Head of caudate nucleus (tissue), 42 donors: ENCODE measurements at regions of chr5 and their contacts with region 1.

Region 1: DNA sequence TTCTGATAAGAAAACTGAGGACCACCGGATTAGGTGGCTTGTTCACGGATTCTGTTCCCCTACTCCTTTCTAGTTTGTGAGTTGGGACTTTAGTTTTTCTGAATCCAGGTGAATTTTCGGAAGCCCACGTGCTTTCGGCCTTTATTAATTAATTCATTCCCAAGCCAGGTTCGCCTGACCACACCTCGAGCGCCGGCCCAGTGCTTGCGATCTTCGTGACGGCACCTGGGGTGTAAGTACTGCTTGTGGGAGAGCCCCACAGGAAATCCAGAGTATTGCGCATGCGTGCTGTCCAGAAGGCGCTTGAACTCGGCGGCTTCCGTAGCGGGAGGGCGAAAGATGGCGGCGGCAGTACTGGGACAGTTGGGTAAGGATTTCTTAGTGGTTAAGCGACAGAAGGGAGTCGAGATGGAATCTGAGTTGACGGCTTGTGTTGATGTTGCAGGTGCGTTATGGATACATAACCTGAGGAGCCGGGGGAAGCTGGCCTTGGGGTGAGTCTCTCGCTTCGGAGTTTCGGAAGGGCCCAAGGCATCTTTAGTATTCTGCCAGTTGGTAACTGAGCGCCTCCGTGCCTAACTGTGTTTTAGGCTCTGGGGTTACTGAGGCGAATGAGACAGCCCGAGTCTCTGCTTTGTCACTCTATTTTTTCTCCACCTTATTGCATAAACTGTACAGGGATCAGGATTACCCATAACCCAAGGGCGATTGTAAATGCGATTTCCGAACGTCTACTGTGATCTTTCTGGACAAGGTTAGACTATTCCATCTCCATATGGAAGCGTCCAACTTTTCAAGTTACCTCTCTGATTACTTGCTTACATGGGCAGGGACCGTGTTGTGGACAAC is at the start of gene MRPL22:
- DNase-seq: peak; percentile 76 to 97 (median 91)

Region 2: GRCh38 chr5:154654486-154655371 is 286.3 kb before region 1 on chr5:
- intact Hi-C with region 1: loop called (anchors 10 kb)
- DNase-seq: no peak

Region 3: GRCh38 chr5:154857530-154858296 is 83.3 kb before region 1 on chr5:
- intact Hi-C with region 1: loop called (anchors 2 kb)
- DNase-seq: peak; percentile 86 to 97 (median 92)